Left ventricle myocardium superior (tissue), 1 donor: ENCODE measurements at regions of chr6 and their contacts with region 1.

Region 1: DNA sequence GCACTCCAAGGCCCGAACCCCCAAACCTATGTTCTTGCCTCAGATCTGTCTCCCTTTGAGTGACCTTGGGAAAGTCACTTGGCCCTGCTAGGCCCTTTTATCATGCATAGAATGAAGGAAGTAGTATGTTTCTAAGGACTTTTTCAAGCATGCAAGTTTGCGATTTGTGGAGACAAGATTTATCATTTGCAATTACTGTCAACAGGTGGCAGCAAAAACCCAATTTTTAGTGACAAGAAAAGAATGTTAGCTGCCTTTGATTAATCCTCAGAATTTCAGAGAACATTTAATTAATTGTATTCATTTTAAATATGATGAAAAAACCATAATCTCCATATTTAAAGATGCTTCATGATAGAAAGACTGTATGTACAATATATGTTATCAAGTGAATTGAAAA is 28.3 kb upstream of the PREP start:
- DNase-seq: no peak
- ATAC-seq: no peak

Region 2: DNA sequence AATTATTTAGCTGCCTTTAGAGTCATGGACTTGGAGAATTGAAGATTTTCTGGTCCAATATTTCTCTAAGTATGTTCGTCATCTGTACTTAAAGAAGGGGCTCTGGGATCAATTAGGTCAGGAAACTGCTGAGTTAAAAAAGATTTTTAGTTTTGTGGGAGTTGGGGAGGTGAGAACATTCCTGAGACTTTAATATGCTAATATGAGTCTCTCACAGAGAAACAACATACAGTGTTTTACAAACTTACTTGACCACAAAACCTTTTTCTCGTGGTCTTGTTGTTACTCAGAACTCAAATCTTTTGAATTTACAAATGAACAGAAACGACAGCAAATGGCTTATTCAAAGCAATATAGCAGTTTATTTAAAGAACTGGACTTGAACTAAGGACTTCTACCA is 406.4 kb before region 1 on chr6:
- intact Hi-C with region 1: no loop called
- DNase-seq: no peak
- ATAC-seq: no peak

Region 3: GRCh38 chr6:105077596-105078385 is 353.4 kb before region 1 on chr6:
- intact Hi-C with region 1: no loop called
- DNase-seq: no peak
- ATAC-seq: no peak

Region 4: DNA sequence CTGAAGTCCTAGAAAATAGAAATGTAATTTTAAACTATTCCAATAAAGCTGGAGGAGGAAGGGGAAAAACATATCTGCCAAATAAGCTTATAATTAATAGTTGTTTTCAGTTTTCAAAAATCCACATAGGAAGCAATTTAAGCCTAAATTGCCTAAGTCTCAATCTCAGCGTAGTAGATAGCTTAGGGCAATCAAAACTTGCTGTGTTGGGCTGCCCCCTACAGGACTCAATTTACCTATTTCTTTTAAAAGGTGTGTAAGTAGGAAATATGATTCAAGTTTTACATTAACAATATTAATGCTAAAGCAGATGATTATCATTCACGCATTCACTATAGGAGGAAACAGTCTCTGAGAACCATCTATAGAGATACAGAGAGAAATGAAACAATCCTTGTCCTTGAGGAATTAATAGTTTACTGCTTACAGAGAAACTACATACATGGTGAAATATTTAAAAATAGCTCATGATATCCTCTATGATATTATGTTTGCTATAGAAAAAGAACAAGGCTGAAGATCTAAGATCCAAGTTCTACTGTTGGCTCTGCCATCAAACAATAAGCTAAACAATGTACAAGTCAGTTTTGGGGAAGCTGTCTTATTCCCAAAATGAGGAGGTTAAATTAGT is 792.2 kb after region 1 on chr6:
- intact Hi-C with region 1: loop called (anchors 5 kb)
- DNase-seq: no peak
- ATAC-seq: peak; percentile 56

Region 5: GRCh38 chr6:106300944-106301343 is 869.7 kb after region 1 on chr6:
- intact Hi-C with region 1: loop called (anchors 5 kb)
- DNase-seq: no peak
- ATAC-seq: no peak

Region 6: GRCh38 chr6:106560996-106561685 is 1129.9 kb after region 1 on chr6:
- intact Hi-C with region 1: loop called (anchors 10 kb)
- DNase-seq: no peak
- ATAC-seq: no peak